T-cell (primary cell): ENCODE measurements at regions of chr6 and their contacts with region 1.

Region 1: GRCh38 chr6:3280091-3280490 is 21.3 kb downstream of the PSMG4 start:
- DNase-seq: peak in 1 of 35 experiments; percentile 4
- ATAC-seq: peak in 2 of 4 experiments; percentile 15 to 19
- H3K4me3 ChIP-seq: no peak overlapping the region
- H3K4me3 Mint-ChIP-seq: no peak overlapping the region
- H3K27ac ChIP-seq: no peak overlapping the region
- H3K27ac Mint-ChIP-seq: no peak overlapping the region
- H3K4me1 ChIP-seq: peaks cover 0 to 3% of the 10 kb centered on the region in 2 experiments
- H3K4me1 Mint-ChIP-seq: peaks cover 5 to 6% (median 6%) of the 10 kb centered on the region in 3 donors
- H3K27me3 ChIP-seq: no peaks in the 10 kb centered on the region
- H3K27me3 Mint-ChIP-seq: no peaks in the 10 kb centered on the region

Region 2: GRCh38 chr6:2127484-2127911 is 1152.6 kb before region 1 on chr6:
- CTCF ChIA-PET with region 1: no interaction called
- POLR2A ChIA-PET with region 1: no interaction called
- DNase-seq: peak in 23 of 35 experiments; percentile 0 to 29 (median 5)
- ATAC-seq: peak; percentile 37 to 73 (median 50)
- H3K4me3 ChIP-seq: no peak overlapping the region
- H3K4me3 Mint-ChIP-seq: peak overlapping the region in 1 of 3 donors; percentile 13
- H3K27ac ChIP-seq: peak overlapping the region; percentile 43
- H3K27ac Mint-ChIP-seq: no peak overlapping the region
- H3K4me1 ChIP-seq: peaks cover 0 to 8% of the 10 kb centered on the region in 2 experiments
- H3K4me1 Mint-ChIP-seq: peaks cover 27 to 46% (median 32%) of the 10 kb centered on the region in 3 donors
- H3K27me3 ChIP-seq: no peaks in the 10 kb centered on the region
- H3K27me3 Mint-ChIP-seq: no peaks in the 10 kb centered on the region

Region 3: GRCh38 chr6:3406891-3407809 is 127.1 kb after region 1 on chr6:
- CTCF ChIA-PET with region 1: interaction called in 1 of 2 experiments, 10 read pairs
- POLR2A ChIA-PET with region 1: no interaction called
- DNase-seq: no peak
- ATAC-seq: no peak
- H3K4me3 ChIP-seq: no peak overlapping the region
- H3K4me3 Mint-ChIP-seq: no peak overlapping the region
- H3K27ac ChIP-seq: no peak overlapping the region
- H3K27ac Mint-ChIP-seq: no peak overlapping the region
- H3K4me1 ChIP-seq: peaks cover 0 to 4% of the 10 kb centered on the region in 2 experiments
- H3K4me1 Mint-ChIP-seq: peaks cover 4 to 7% (median 5%) of the 10 kb centered on the region in 3 donors
- H3K27me3 ChIP-seq: no peaks in the 10 kb centered on the region
- H3K27me3 Mint-ChIP-seq: no peaks in the 10 kb centered on the region

Region 4: DNA sequence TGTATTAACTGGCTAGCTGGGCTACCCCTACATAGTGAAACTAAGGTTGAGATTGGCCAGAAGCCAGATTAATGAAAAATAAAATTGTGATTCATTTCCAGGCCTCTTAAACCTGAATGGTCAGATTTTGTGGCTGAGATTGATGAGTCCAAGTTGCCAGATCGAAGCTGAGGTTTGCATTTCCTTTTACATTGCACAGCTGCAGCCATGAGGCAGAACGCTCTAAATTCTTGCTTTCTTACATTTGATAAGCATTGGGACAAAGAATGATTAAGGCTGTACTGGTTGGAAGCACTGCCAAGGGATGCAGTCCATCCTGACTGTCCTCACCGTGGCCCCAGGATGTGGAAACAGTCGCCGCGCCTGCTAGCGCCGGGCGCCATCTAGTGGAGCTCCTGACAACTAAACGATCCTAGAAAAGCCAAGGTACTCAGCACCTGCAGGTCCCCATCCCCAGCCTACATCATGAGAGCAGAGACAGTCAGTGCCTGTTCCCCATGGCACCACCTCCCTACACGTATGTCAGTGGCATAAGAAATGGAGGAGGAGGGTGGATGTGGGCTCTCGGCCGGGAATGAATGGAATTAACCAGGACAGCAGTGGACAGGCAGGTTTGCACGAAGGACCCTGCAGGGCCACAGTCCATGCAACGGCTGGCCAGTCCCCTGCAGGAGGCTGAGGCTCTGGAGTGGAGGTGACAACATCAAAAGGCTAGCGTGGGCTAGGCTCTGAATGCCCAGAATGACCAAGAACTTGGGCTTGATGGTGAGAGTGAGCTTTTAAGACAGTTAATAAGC is 452.5 kb after region 1 on chr6:
- CTCF ChIA-PET with region 1: interaction called, 8 to 50 read pairs
- POLR2A ChIA-PET with region 1: no interaction called
- DNase-seq: peak; percentile 10 to 76 (median 53)
- ATAC-seq: peak; percentile 62 to 84 (median 78)
- H3K4me3 ChIP-seq: no peak overlapping the region
- H3K4me3 Mint-ChIP-seq: no peak overlapping the region
- H3K27ac ChIP-seq: no peak overlapping the region
- H3K27ac Mint-ChIP-seq: no peak overlapping the region
- H3K4me1 ChIP-seq: peaks cover 0 to 2% of the 10 kb centered on the region in 2 experiments
- H3K4me1 Mint-ChIP-seq: peaks cover 2 to 8% (median 2%) of the 10 kb centered on the region in 3 donors
- H3K27me3 ChIP-seq: peaks cover 0 to 26% of the 10 kb centered on the region in 2 experiments
- H3K27me3 Mint-ChIP-seq: peaks cover 20 to 24% of the 10 kb centered on the region in 2 donors